GM12878 (cell line): ENCODE measurements at regions of chrX and their contacts with region 1.

Region 1: GRCh38 chrX:48021026-48021900 is 14.5 kb downstream of the SPACA5 start:
- DNase-seq: peak; percentile 62
- ATAC-seq: peak; percentile 83
- H3K4me3 ChIP-seq: peak overlapping the region; percentile 60
- H3K27ac ChIP-seq: peak overlapping the region; percentile 89
- H3K4me1 ChIP-seq: no peaks in the 10 kb centered on the region
- H3K27me3 ChIP-seq: no peaks in the 10 kb centered on the region
- CTCF ChIP-seq: no peak
- EP300 ChIP-seq: no peak
- POLR2A ChIP-seq: no peak
- RAD21 ChIP-seq: no peak

Region 2: GRCh38 chrX:47497273-47497672 is 524.0 kb before region 1 on chrX:
- CTCF ChIA-PET with region 1: no interaction called
- POLR2A ChIA-PET with region 1: no interaction called
- RAD21 ChIA-PET with region 1: no interaction called
- SMC1A ChIA-PET with region 1: no interaction called
- in situ Hi-C with region 1: no loop called
- intact Hi-C with region 1: loop called (anchors 5 kb)
- DNase-seq: no peak
- ATAC-seq: no peak
- H3K4me3 ChIP-seq: no peak overlapping the region
- H3K27ac ChIP-seq: no peak overlapping the region
- H3K4me1 ChIP-seq: no peaks in the 10 kb centered on the region
- H3K27me3 ChIP-seq: no peaks in the 10 kb centered on the region
- CTCF ChIP-seq: peak; percentile 15 to 43 (median 20); a peak in 4 of 6 replicates
- EP300 ChIP-seq: no peak
- POLR2A ChIP-seq: no peak
- RAD21 ChIP-seq: peak; percentile 65

Region 3: GRCh38 chrX:47658684-47659515 is 362.4 kb before region 1 on chrX and contains the start of gene UXT:
- CTCF ChIA-PET with region 1: no interaction called
- POLR2A ChIA-PET with region 1: no interaction called
- RAD21 ChIA-PET with region 1: no interaction called
- SMC1A ChIA-PET with region 1: no interaction called
- in situ Hi-C with region 1: no loop called
- intact Hi-C with region 1: loop called (anchors 5 kb)
- DNase-seq: peak; percentile 74
- ATAC-seq: peak; percentile 96
- H3K4me3 ChIP-seq: peak within 1 kb of the TSS; percentile 70
- H3K27ac ChIP-seq: peak within 1 kb of the TSS; percentile 86
- H3K4me1 ChIP-seq: no peaks in the 10 kb centered on the region
- H3K27me3 ChIP-seq: no peaks in the 10 kb centered on the region
- CTCF ChIP-seq: no peak
- EP300 ChIP-seq: 0 out of 4 replicates have a peak, but pooled peaks of 1 of the 2 experiments have one; percentile 9
- POLR2A ChIP-seq: peak; percentile 94; the same call in 1 of the 2 replicates
- RAD21 ChIP-seq: no peak
- polyA plus RNA-seq, gene UXT: 105 to 204 TPM

Region 4: DNA sequence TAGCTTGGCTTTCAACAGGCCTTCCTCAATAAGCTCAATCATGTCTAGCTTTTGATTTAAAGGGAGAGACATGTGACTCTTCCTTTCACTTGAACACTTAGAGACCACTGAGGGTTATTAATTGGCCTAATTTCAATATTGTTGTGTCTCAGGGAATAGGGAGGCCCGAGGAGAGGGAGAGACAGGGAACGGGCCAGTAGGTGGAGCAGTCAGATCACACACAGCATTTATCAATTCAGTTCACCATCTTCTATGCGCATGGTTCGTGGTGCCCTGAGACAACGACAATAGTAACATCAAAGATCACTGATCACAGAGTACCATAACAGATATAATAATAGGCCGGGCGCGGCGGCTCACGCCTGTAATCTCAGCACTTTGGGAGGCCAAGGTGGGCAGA is 166.8 kb before region 1 on chrX:
- CTCF ChIA-PET with region 1: interaction called, 32 read pairs
- POLR2A ChIA-PET with region 1: no interaction called
- RAD21 ChIA-PET with region 1: interaction called, 4 read pairs
- SMC1A ChIA-PET with region 1: interaction called, 7 read pairs
- in situ Hi-C with region 1: no loop called
- intact Hi-C with region 1: loop called (anchors 1 kb)
- DNase-seq: no peak
- ATAC-seq: 0 out of 3 replicates have a peak, but pooled peaks have one; percentile 45
- H3K4me3 ChIP-seq: no peak overlapping the region
- H3K27ac ChIP-seq: no peak overlapping the region
- H3K4me1 ChIP-seq: no peaks in the 10 kb centered on the region
- H3K27me3 ChIP-seq: no peaks in the 10 kb centered on the region
- CTCF ChIP-seq: peak in 2 of 3 experiments; percentile 27 to 47; a peak in 3 of 6 replicates
- EP300 ChIP-seq: no peak
- POLR2A ChIP-seq: no peak
- RAD21 ChIP-seq: peak; percentile 40